HEK293T (cell line): ENCODE measurements at regions of chr22 and their contacts with region 1.

Region 1: GRCh38 chr22:25014896-25015755 is 62.6 kb downstream of the KIAA1671 start:
- DNase-seq: no peak

Region 2: DNA sequence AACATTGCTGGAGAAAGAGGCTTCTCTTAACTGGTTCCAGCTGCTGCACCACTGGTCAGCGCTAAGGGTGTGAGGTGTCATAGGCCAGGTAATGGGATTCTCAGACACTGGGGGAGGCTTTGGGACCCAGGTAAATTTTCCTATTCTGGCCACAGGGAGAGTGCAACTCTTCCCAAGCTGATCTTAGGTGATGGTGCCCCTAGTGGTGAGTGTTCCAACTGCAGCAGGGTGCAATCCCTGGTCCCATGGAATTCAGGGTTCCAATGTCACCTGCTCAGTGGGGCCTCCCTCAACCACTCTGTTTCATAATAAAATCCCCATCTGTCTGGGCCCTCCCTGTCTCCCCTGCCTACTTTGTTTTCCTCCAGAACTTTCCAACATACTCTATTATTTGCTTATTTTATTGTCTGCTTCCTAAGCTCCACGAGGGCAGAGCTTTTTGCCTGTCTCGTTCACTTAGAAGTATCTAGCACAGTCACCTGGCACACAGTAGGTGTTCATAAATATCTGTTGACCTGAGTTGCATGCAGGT is 212.0 kb before region 1 on chr22:
- CTCF ChIA-PET with region 1: interaction called, 11 read pairs
- POLR2A ChIA-PET with region 1: no interaction called
- DNase-seq: peak; percentile 80

Region 3: DNA sequence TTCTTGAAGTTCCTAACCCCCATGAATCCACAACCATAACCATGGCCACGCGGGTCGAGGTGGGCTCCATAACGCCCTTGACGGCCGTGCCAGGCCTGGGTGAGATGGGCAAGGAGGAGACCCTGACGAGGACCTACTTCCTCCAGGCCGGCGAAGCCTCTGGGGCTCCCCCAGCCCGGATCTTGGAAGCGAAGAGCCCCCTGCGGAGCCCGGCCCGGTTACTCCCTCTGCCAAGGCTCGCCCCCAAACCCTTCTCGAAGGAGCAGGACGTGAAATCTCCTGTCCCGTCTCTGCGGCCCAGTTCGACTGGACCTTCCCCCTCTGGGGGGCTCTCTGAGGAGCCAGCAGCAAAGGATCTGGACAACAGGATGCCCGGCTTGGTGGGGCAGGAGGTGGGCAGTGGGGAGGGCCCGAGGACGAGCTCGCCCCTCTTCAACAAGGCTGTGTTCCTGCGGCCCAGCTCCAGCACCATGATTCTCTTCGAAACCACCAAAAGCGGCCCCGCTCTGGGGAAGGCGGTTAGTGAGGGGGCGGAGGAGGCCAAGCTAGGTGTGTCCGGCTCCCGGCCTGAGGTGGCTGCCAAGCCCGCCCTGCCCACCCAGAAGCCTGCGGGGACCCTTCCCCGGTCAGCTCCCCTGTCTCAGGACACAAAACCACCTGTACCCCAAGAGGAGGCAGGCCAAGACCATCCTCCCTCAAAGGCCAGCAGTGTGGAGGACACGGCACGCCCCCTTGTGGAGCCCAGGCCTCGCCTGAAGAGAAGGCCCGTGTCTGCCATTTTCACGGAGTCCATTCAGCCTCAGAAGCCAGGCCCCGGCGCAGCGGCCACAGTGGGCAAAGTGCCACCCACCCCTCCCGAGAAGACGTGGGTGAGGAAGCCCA is 13.1 kb after region 1 on chr22:
- CTCF ChIA-PET with region 1: no interaction called
- POLR2A ChIA-PET with region 1: no interaction called
- DNase-seq: peak; percentile 42